ENCODE measurements at regions of chr9 and their contacts with region 1.

Region 1: DNA sequence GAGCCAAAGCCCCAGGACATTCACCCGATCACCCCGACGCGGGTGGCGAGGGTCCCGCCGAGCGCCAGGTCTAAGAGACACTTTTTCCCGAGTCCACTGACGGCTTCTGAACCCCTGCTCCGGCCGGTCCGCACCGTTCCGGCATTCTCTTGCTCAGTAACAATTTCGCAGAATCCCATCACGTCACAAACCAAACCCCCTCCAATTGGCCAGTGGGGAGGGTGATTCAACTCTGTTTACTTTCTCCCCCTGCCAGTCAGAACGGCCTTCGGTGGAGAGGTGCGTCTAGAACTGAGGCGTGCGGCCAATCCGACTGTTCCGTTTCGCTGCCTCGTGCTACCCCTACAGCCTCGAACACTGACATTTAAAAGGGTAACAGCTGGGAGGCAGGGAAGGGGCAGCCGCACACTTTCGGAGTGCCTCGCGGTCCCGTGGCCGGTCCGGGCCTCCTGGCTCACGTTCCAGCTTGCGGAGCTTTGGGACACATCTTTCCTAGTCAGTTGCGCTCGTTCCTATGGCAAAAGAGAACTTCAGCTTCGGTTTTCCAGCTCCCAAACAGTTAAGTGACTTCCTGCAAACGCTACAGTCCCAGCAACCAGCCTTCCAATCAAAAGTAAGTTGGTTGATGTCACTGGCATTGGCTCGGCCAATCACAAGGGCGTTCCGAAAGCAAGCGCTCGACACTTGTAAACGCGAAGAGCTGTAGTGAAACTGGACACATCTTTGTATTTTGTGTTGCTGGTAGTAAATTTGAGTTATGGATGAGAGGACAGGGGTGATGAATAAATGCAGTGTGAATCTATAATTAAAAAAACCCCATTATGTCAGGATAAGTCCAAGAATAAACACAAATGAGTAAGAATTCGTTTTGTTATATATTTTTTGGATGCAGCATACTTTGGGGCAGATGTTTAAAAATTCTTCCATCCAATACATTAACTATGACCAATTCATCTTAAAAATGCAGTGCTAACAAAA is at the start of gene KLF9:
- DNase-seq: peak; percentile 94 to 97 (median 96)
- ATAC-seq: peak; percentile 83
- H3K4me3 ChIP-seq: peak within 1 kb of the TSS; percentile 50
- H3K27ac ChIP-seq: peak within 1 kb of the TSS; percentile 95
- H3K4me1 ChIP-seq: peaks cover 2% of the 10 kb centered on the region
- H3K27me3 ChIP-seq: no peaks in the 10 kb centered on the region
- total RNA-seq, gene KLF9: 59.3 to 76.6 (median 72.6) TPM

Region 2: GRCh38 chr9:70340572-70340971 is 73.5 kb before region 1 on chr9:
- intact Hi-C with region 1: loop called in 1 of 4 experiments (anchors 10 kb)
- DNase-seq: no peak
- ATAC-seq: no peak
- H3K4me3 ChIP-seq: no peak overlapping the region
- H3K27ac ChIP-seq: no peak overlapping the region
- H3K4me1 ChIP-seq: no peaks in the 10 kb centered on the region
- H3K27me3 ChIP-seq: no peaks in the 10 kb centered on the region

Region 3: DNA sequence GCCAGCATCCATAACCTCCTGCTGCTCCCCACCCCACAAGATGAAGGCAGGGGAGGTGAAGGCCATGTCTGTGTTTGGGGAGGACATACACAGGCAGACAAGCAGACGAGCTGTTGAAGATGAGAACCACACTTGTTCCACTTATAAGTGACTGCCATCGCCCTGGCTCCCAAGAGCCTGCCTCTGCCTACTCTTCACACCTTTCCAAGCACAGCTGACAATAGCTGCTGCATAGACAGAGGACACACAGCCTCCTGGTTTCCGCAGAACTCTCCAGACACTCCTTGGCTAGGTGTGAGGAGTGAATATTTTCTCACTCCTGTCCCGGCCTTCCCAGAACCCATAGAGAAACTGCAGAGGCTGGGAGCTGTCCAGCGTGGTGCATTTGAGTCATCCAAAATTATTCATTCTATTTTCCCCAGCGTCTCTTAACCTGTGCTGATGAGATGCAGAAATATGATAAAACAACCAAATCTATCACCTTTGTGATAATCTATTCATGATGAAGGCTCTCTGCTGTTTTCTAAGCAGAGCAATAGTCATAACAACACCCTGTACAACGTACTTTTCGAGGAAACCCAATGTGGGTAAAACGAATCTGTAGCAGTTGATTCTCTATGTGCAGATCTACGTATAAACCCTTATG is 24.3 kb before region 1 on chr9:
- intact Hi-C with region 1: loop called in 1 of 4 experiments (anchors 2 kb)
- DNase-seq: peak in 1 of 3 donors; percentile 59
- ATAC-seq: peak; percentile 56 to 77
- H3K4me3 ChIP-seq: no peak overlapping the region
- H3K27ac ChIP-seq: no peak overlapping the region
- H3K4me1 ChIP-seq: peaks cover 33% of the 10 kb centered on the region
- H3K27me3 ChIP-seq: no peaks in the 10 kb centered on the region

Region 4: GRCh38 chr9:70484210-70485130 is 70.4 kb after region 1 on chr9:
- intact Hi-C with region 1: loop called in 2 of 4 experiments (anchors 2 to 5 kb)
- DNase-seq: no peak
- ATAC-seq: peak; percentile 59 to 75
- H3K4me3 ChIP-seq: no peak overlapping the region
- H3K27ac ChIP-seq: peak overlapping the region; percentile 74
- H3K4me1 ChIP-seq: peaks cover 35% of the 10 kb centered on the region
- H3K27me3 ChIP-seq: no peaks in the 10 kb centered on the region

Region 5: DNA sequence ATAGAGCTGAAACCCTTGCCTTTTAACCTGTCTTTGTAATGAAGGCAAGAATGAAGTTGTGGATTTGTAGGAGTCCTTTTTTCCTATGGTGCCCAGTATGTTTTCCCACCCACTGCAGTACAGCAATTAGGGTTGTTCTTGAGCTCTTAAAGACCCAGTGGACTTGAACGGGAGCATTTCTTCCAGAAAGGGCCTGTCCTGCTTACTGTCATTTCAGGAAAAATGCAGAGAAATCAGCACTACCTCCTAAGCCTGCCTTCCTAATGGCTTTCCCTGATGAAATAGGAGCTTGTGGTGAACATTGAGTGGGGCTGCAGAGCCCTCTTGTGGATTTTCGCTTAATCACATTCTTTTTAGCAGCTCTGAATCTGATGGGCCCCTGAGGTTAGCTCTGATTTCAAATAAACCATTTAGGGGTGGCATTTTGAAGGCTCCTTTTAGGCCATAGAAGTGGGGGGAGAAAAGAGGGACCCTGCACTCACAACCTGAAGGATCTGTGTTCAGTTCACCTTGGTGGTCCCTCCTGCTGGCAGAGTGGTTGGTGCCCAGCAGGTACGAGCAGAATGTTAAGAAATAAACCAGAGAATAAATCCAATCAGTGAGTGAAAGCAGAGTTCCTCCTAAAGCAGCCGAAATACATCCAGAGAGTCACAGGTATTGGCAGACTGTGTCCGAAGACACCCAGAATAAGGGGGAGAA is 188.4 kb after region 1 on chr9:
- intact Hi-C with region 1: loop called in 3 of 4 experiments (anchors 2 to 10 kb)
- DNase-seq: peak; percentile 52 to 73 (median 56)
- ATAC-seq: peak; percentile 55 to 62
- H3K4me3 ChIP-seq: peak overlapping the region; percentile 30
- H3K27ac ChIP-seq: peak overlapping the region; percentile 94
- H3K4me1 ChIP-seq: peaks cover 13% of the 10 kb centered on the region
- H3K27me3 ChIP-seq: no peaks in the 10 kb centered on the region

Region 6: DNA sequence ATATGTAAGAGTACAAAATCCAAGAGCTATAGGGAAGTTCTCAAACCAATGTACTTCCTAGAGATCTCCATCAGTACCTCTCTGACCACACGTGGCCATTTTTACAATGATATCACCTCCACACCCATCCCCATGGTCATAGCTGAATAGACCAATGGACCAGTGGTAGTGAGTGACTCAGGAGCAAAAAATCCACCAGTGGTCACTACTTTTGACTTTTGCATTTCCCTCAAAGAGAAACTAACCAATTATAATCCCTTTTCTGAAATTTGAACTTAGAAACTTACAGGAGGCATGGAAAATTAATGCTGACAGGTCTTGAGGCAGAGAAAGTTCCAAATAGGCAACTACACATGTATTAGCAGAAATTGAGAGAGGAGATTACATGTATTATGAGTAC is 469.0 kb after region 1 on chr9:
- intact Hi-C with region 1: no loop called
- DNase-seq: no peak
- ATAC-seq: no peak
- H3K4me3 ChIP-seq: no peak overlapping the region
- H3K27ac ChIP-seq: no peak overlapping the region
- H3K4me1 ChIP-seq: no peaks in the 10 kb centered on the region
- H3K27me3 ChIP-seq: no peaks in the 10 kb centered on the region

Measured in right cardiac atrium (tissue), 5 donors.